Heart right ventricle (tissue), 16 donors: ENCODE measurements at regions of chr6 and their contacts with region 1.

Region 1: DNA sequence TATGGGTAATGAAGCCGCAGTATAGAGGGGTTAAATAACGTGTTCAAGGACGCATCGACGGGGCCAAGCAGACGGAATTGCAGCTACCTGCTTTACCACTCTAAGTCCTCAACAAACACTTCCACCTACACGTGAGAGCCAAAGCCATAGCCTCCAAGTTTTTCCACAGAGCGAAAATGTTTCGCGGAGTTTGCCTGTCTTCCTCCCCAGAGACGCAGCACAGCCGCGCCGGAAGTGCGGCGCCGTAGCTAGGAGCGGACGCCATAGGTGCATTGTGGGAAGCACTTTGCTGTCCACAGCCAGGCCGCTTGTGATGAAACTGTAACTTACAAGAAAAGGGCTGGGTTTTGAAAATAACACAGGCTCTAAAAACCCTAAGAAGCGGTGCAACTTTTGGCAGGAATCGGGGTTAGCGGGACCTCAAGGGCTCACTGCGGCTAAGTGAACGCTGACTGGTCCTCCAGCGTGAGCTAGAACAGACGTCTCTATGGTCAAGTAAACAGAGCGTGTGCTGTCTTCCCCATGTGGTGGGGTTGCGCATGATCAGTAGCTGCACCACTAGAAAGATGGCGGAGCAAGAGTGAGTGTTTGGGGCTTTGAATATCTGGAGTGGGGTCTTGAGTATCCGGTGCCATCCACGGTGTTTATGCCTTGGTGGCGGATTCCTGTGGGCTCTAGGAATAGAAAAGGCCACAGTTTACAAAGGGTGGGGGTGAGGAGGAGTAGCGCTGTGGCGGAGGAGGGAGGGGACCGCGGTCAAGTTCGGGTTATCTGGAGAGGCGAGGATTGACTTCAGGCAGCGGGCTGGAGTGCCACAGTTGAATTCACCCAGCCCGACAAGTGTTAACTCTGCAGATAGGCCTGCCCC is at the start of gene RPL7L1:
- DNase-seq: peak; percentile 80 to 87
- ATAC-seq: peak; percentile 96 to 99 (median 98)
- H3K4me3 ChIP-seq: peak within 1 kb of the TSS; percentile 63 to 95 (median 74)
- H3K27ac ChIP-seq: peak within 1 kb of the TSS; percentile 79 to 98 (median 94)
- H3K4me1 ChIP-seq: peaks cover 2 to 43% (median 26%) of the 10 kb centered on the region in 9 donors
- H3K27me3 ChIP-seq: no peaks in the 10 kb centered on the region
- CTCF ChIP-seq: peak in 3 of 9 donors; percentile 3 to 28 (median 9)
- total RNA-seq, gene RPL7L1: 39.2 to 52.5 (median 44.7) TPM

Region 2: DNA sequence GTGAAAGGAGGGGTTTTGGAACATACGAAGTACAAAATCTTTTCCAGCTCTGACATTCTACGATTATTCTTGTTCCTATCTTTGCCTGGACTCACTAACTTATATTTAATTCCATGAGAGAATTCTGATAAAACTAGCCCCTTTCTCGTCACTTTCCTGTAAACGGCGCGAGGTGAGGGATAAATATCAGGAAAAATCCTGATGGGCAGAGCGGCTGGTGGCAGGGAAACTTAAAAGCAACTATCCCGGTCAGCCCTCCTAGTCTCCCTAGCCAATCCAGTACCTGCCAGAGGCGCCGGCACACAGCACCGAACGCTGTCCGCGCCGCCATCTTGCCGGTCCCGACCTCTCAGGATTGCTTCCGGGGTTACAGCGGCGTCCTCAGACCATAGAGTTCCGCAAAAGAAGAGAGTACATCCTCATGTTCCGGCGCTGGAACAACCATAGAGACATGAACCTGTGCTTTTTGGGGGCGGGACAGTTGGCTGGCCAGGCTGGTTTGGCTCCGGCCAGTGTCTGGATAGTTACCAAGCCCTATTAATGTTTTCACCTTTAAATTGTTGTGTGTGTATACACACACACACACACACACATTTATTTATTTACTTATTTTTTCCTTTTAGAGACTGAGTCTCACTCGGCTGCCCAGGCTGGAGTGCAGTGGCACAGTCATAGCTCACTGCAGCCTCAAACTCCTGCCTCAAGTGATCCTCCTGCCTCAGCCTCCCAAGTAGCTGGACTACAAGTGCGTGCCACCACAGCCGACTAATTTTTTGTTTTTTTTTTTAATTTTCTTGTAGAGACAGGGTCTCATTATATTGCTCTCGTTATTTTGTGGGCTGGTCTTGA is 661.9 kb before region 1 on chr6 and contains the start of gene MRPS10:
- intact Hi-C with region 1: loop called in 1 of 10 experiments (anchors 2 kb)
- DNase-seq: peak; percentile 88 to 94
- ATAC-seq: peak; percentile 99 to 100 (median 100)
- H3K4me3 ChIP-seq: peak within 1 kb of the TSS; percentile 59 to 88 (median 77)
- H3K27ac ChIP-seq: peak within 1 kb of the TSS in 9 of 10 donors; percentile 49 to 89 (median 81)
- H3K4me1 ChIP-seq: peaks cover 0 to 28% (median 20%) of the 10 kb centered on the region in 9 donors
- H3K27me3 ChIP-seq: no peaks in the 10 kb centered on the region
- CTCF ChIP-seq: no peak
- total RNA-seq, gene MRPS10: 47.4 to 82.1 (median 63.1) TPM

Region 3: DNA sequence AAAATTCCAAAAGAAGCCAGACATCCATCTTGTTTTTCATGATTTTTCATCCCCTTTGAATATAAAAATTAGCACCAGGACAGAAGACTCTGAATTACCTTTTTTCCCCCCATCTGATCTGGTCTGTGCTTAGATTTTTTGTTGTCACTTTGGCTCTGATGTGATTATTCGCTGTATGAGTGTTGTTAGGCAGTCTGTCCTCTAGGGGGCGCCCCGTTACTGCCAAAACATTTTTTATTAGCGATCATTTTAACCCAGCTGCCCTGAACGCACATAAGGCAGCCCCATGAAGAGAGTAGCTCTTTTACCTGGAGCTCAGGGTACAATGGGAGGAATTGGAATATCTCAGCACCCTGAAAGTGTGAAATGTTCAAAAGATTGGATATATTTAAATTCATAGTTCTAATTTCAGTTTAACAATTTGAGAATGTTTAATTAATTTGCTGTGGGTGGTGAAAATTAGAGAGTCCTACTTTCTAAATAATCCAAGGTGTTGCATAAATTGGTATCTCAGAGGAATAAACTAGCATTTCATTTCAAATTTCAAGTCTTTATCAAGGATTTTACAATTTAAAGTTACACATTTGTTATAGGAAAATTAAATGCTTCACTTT is 218.0 kb before region 1 on chr6:
- intact Hi-C with region 1: loop called (anchors 1 to 5 kb)
- DNase-seq: peak; percentile 68 to 81
- ATAC-seq: peak in 7 of 8 donors; percentile 61 to 90 (median 82)
- H3K4me3 ChIP-seq: no peak overlapping the region
- H3K27ac ChIP-seq: no peak overlapping the region
- H3K4me1 ChIP-seq: no peaks in the 10 kb centered on the region
- H3K27me3 ChIP-seq: no peaks in the 10 kb centered on the region
- CTCF ChIP-seq: peak; percentile 81 to 95 (median 91)

Region 4: DNA sequence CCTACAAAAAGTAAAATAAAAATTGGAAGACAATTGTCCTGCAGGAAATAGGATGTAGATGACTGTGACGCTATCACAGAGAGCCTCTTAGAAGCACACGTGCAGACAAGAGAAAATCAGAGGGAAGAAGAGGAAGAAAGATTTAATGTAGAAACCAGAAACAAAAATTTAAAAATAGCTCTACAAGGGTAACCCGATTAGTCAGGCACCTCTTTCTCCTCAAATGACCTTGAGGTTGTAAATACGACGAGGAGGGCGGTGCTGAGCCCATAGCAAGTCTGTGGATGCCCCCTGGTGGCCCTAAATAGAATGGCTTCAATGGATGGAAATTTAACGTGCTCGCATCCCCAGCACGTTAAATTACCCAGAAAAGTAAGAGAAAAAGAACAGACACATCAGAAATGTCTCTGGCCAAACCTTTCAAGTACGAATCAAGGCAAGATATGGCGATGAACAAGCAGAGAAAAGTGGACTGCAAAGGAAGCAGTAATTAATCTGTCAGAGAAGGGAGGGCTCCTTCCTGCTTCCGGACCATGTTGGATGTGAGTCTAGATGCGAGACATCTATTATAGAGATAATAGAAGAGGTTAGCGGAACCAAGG is 153.0 kb before region 1 on chr6:
- intact Hi-C with region 1: loop called in 9 of 10 experiments (anchors 1 to 10 kb)
- DNase-seq: peak; percentile 42 to 84
- ATAC-seq: peak; percentile 91 to 97 (median 95)
- H3K4me3 ChIP-seq: peak overlapping the region; percentile 3 to 66 (median 58)
- H3K27ac ChIP-seq: peak overlapping the region in 9 of 10 donors; percentile 34 to 88 (median 76)
- H3K4me1 ChIP-seq: peaks cover 4 to 20% (median 14%) of the 10 kb centered on the region in 9 donors
- H3K27me3 ChIP-seq: no peaks in the 10 kb centered on the region
- CTCF ChIP-seq: peak; percentile 82 to 98 (median 94)

Region 5: GRCh38 chr6:42745707-42746462 is 133.7 kb before region 1 on chr6 and contains the start of gene TBCC:
- intact Hi-C with region 1: loop called in 5 of 10 experiments (anchors 2 to 5 kb)
- DNase-seq: peak; percentile 93 to 97
- ATAC-seq: peak; percentile 92 to 97 (median 94)
- H3K4me3 ChIP-seq: peak within 1 kb of the TSS; percentile 68 to 99 (median 96)
- H3K27ac ChIP-seq: peak within 1 kb of the TSS; percentile 84 to 98 (median 95)
- H3K4me1 ChIP-seq: peaks cover 5 to 38% (median 32%) of the 10 kb centered on the region in 9 donors
- H3K27me3 ChIP-seq: no peaks in the 10 kb centered on the region
- CTCF ChIP-seq: no peak
- total RNA-seq, gene TBCC: 9.8 to 16.1 (median 13.3) TPM

Region 6: DNA sequence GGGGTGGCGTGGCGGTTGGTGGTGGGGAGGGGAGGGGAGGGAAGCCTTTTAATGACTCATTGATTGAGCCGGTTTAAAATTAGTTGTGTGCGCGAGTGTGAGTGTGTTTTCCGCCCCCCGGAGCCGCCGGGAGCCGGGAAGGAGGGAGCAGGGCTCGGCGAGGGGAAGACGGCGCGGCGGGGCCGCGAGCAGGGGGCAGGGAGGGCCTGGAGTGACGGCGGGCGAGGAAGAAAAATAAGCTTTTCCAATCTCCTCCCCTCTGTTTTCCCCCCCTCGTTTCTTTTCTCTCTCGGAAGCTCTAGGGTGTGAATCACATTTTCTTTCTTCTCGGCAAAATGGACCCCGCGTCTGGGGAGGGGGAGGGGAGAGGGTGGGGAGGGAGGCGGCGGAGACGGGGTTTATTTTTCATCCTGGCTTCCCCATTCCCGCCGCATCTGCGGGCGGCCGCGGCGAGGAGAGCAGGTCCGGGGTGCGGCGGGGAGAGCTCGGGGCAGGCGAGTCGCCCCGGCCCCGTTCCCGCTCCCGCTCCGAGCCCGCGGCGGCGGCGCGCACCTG is 96.9 kb before region 1 on chr6:
- intact Hi-C with region 1: loop called in 2 of 10 experiments (anchors 2 to 5 kb)
- DNase-seq: peak; percentile 81 to 85
- ATAC-seq: peak; percentile 70 to 85 (median 81)
- H3K4me3 ChIP-seq: peak overlapping the region; percentile 61 to 100 (median 90)
- H3K27ac ChIP-seq: peak overlapping the region; percentile 99 to 100 (median 100)
- H3K4me1 ChIP-seq: peaks cover 3 to 42% (median 39%) of the 10 kb centered on the region in 9 donors
- H3K27me3 ChIP-seq: no peaks in the 10 kb centered on the region
- CTCF ChIP-seq: no peak

Region 7: DNA sequence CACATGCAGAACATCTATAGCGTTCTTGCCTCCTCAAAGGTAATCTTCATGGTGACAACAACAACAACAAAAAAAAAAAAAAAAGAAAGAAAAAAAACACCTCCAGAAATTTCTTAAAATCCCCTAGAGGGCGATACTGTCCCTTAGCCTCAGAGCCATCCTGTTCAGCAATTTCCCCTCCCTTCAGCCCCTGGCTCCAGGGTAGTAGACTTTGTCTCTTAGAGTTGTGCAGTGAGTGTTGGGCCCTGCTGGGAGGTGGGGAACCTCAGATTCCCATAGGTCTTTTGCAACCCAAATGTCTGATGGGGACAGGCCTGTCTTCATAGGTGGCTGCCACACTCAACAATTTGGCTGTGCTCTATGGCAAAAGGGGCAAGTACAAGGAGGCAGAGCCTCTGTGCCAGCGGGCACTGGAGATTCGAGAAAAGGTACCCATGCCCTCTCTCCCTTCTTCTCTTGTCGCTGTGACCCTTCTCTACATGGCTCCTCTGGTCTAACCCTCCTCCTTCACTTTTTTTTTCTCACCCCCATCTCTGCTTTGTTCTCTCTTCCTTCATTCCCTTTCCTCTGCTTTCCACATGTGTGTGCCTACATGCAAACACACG is 190.5 kb after region 1 on chr6:
- intact Hi-C with region 1: no loop called
- DNase-seq: no peak
- ATAC-seq: peak in 1 of 8 donors; percentile 27
- H3K4me3 ChIP-seq: no peak overlapping the region
- H3K27ac ChIP-seq: no peak overlapping the region
- H3K4me1 ChIP-seq: no peaks in the 10 kb centered on the region
- H3K27me3 ChIP-seq: no peaks in the 10 kb centered on the region
- CTCF ChIP-seq: peak in 8 of 9 donors; percentile 13 to 56 (median 43)